ENCODE measurements at regions of chr2 and their contacts with region 1.

Region 1: DNA sequence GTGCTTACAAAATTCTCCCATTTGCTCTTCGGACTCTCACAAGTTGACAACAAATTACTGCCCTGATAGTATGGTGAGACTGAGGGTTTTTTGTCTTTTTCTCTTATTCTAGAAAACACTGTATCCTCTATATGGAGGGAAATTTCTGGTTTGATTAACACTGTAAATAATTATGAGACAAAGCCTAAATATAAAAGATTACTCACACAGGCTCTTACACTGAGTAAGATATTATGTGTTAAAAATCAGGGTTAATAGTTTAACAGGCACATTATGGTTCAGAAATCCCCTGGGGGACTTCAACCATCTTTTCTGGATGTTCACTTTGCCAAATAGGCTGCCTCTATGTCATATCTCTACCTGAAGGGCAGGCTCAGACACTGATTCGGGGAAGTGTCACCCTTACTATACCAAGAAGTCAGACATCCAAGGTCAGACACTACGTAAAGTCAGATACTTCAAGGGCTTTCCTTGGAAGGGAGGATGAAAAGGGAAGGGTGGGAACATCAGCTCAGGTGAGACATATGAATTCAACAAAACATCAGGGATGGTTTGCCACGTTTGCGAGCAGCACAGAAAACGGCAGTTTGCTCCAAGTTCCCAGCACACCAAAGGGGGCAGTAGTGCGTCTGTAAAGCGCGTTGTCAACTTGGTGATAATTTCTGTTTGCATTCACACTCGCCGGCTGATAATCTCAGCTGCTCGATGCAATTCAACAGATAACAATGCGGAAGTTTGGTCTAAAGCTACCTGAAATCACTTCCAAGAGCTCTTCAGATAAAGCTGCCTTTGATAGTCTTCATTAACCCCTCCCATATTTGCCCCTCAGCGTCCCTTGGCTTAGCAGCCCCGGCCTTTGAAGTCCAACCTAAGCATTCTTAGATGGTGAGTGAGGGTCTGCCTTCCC is 972 bp upstream of the RASGRP3 start:
- DNase-seq: peak in 4 of 5 donors; percentile 75 to 80 (median 78)
- ATAC-seq: peak; percentile 36 to 65 (median 50)
- H3K4me3 ChIP-seq: peak overlapping the region; percentile 36 to 79 (median 62)
- H3K27ac ChIP-seq: peak overlapping the region; percentile 83 to 99 (median 94)
- H3K4me1 ChIP-seq: peaks cover 3 to 65% (median 44%) of the 10 kb centered on the region in 12 donors
- H3K27me3 ChIP-seq: no peaks in the 10 kb centered on the region
- CTCF ChIP-seq: peak; percentile 61 to 90 (median 78)
- POLR2A ChIP-seq: no peak

Region 2: DNA sequence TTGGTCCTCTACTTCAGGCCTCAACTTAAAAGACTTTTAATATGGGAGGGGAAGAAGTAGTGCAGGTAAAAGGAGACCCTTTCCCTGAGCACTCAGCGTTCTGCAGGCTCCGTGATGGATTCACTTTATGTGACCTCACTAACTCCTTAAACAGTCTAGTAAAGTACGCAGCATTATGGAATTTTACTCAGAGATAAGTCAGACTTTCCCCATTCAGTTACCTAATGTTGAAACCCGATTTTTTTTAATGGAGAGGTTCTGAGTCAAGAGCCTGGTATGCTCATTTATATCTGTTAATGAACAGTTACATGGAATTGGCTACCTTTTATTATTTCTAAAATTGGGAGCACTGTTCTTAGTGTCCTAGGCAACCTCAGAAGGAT is 35.1 kb after region 1 on chr2:
- intact Hi-C with region 1: no loop called
- DNase-seq: no peak
- ATAC-seq: no peak
- H3K4me3 ChIP-seq: no peak overlapping the region
- H3K27ac ChIP-seq: no peak overlapping the region
- H3K4me1 ChIP-seq: peaks cover 0 to 37% (median 17%) of the 10 kb centered on the region in 12 donors
- H3K27me3 ChIP-seq: no peaks in the 10 kb centered on the region
- CTCF ChIP-seq: no peak
- POLR2A ChIP-seq: no peak

Region 3: GRCh38 chr2:33521791-33522281 is 46.4 kb after region 1 on chr2:
- intact Hi-C with region 1: loop called in 1 of 10 experiments (anchors 5 kb)
- DNase-seq: peak in 3 of 5 donors; percentile 18 to 36 (median 28)
- ATAC-seq: peak; percentile 48 to 73 (median 61)
- H3K4me3 ChIP-seq: no peak overlapping the region
- H3K27ac ChIP-seq: peak overlapping the region in 4 of 12 donors; percentile 4 to 62 (median 28)
- H3K4me1 ChIP-seq: peaks cover 0 to 25% (median 13%) of the 10 kb centered on the region in 12 donors
- H3K27me3 ChIP-seq: no peaks in the 10 kb centered on the region
- CTCF ChIP-seq: no peak
- POLR2A ChIP-seq: no peak

Region 4: GRCh38 chr2:33529771-33530351 is 54.4 kb after region 1 on chr2:
- intact Hi-C with region 1: loop called in 7 of 10 experiments (anchors 2 to 10 kb)
- DNase-seq: no peak
- ATAC-seq: no peak
- H3K4me3 ChIP-seq: no peak overlapping the region
- H3K27ac ChIP-seq: peak overlapping the region in 1 of 12 donors; percentile 37
- H3K4me1 ChIP-seq: peaks cover 0 to 31% (median 15%) of the 10 kb centered on the region in 12 donors
- H3K27me3 ChIP-seq: no peaks in the 10 kb centered on the region
- CTCF ChIP-seq: no peak
- POLR2A ChIP-seq: no peak

Region 5: DNA sequence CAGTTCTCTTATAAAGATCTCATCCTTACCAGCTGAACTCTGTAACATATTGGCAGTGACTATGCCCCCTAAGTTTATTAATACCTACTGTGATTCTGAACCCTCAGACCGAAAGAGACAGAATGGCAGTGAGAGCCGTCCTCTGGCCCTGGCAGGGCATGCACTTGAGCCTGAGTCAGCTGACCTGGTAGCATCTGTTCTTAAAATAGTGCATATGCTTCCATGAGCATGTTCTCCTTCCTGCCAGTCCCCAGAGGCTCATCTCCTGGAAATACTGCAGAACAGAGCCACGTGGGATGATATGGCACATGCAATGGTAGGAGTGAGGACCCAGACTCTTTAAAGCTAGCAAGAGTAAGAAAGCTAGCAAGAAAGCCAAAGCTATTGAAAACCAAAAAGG is 59.9 kb after region 1 on chr2:
- intact Hi-C with region 1: loop called in 7 of 10 experiments (anchors 2 to 10 kb)
- DNase-seq: peak in 4 of 5 donors; percentile 56 to 81 (median 72)
- ATAC-seq: peak; percentile 92 to 93 (median 93)
- H3K4me3 ChIP-seq: no peak overlapping the region
- H3K27ac ChIP-seq: peak overlapping the region; percentile 18 to 81 (median 69)
- H3K4me1 ChIP-seq: peaks cover 0 to 35% (median 13%) of the 10 kb centered on the region in 12 donors
- H3K27me3 ChIP-seq: no peaks in the 10 kb centered on the region
- CTCF ChIP-seq: no peak
- POLR2A ChIP-seq: no peak

Region 6: DNA sequence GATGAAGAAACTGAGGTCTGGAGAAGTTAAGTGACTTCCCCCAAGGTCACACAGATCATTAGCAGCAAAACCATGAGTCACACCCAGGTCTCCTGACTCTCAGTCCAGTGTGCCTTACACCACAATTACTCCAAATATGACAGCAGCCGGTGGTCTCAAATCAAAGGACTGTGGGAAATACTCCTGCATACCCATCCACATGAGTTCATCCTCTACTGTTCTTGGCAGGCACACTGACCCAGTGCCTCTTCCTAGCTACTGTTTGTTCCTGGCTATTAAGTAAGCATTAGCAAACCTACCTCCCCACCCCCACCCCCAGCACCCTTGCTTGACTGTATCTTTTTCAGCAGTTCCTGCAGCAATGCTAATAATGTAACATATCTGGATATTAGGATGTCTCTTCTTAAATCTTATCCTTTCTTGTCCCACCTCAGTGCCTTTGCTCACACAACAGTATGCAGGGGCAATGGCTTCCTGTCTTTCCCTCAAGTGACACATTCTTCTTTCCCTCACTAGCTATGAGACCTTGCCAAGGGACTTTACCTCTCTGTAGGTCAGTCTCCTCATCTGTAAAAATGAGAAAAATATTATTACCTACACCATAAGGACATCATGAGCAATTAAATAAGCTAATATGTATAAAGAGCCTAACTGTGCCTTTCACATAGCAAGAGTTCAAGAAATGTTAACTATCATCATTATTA is 77.4 kb after region 1 on chr2:
- intact Hi-C with region 1: loop called in 1 of 10 experiments (anchors 5 kb)
- DNase-seq: no peak
- ATAC-seq: peak in 3 of 4 donors; percentile 36 to 57 (median 49)
- H3K4me3 ChIP-seq: no peak overlapping the region
- H3K27ac ChIP-seq: peak overlapping the region in 3 of 12 donors; percentile 5 to 62 (median 40)
- H3K4me1 ChIP-seq: peaks cover 0 to 38% (median 24%) of the 10 kb centered on the region in 12 donors
- H3K27me3 ChIP-seq: no peaks in the 10 kb centered on the region
- CTCF ChIP-seq: no peak
- POLR2A ChIP-seq: no peak

Region 7: GRCh38 chr2:33583194-33583938 is 107.9 kb after region 1 on chr2:
- intact Hi-C with region 1: loop called in 8 of 10 experiments (anchors 1 to 10 kb)
- DNase-seq: no peak
- ATAC-seq: peak in 2 of 4 donors; percentile 47 to 48
- H3K4me3 ChIP-seq: no peak overlapping the region
- H3K27ac ChIP-seq: peak overlapping the region in 2 of 12 donors; percentile 28 to 36
- H3K4me1 ChIP-seq: peaks cover 0 to 25% (median 8%) of the 10 kb centered on the region in 12 donors
- H3K27me3 ChIP-seq: no peaks in the 10 kb centered on the region
- CTCF ChIP-seq: peak; percentile 70 to 88 (median 82)
- POLR2A ChIP-seq: no peak

Region 8: DNA sequence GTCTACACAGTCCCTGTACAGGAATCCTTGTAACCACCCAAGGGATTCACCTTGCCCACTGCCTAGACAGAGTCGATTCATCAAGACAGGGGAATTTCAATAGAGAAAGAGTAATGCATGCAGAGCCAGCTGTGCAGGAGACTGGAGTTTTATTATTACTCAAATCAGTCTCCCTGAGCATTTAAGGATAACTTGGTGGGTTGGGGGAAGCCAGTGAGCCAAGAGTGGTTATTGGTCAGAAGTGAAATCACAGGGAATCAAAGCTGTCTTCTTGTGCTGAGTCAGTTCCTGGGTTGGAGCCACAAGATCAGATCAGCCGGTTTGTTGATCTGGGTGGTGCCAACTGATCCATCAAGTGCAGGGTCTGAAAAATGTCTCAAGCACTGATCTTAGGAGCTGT is 141.4 kb after region 1 on chr2:
- intact Hi-C with region 1: no loop called
- DNase-seq: no peak
- ATAC-seq: no peak
- H3K4me3 ChIP-seq: no peak overlapping the region
- H3K27ac ChIP-seq: no peak overlapping the region
- H3K4me1 ChIP-seq: peaks cover 0 to 8% (median 0%) of the 10 kb centered on the region in 12 donors
- H3K27me3 ChIP-seq: no peaks in the 10 kb centered on the region
- CTCF ChIP-seq: no peak
- POLR2A ChIP-seq: no peak

Measured in heart left ventricle (tissue), 16 donors.